RWPE1 (cell line): ENCODE measurements at regions of chr12 and their contacts with region 1.

Region 1: GRCh38 chr12:6987948-6988553 is 17.3 kb downstream of the EMG1 start:
- DNase-seq: no peak
- H3K27ac ChIP-seq: no peak overlapping the region
- CTCF ChIP-seq: no peak

Region 2: DNA sequence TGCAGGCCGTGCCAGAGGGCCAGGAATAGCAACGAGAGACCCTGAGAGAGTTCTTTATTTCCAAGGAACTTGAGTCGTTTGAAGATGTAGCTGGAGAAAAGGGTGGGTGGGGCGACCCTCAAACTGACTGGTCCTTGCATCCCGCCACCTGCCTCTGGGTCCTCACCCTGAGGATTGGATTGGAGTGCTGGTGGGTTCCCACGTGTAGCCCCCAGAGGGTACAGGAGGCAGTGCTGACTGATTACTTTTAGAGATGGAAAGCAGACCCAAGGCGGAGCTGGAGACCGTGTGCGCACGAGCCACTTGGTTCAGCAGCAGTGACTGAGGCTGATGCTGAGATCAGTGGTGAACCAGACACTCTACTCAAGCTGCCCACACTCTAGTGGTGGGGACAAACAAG is 10.4 kb before region 1 on chr12:
- CTCF ChIA-PET with region 1: no interaction called
- POLR2A ChIA-PET with region 1: interaction called, 16 read pairs
- DNase-seq: no peak
- H3K27ac ChIP-seq: peak overlapping the region; percentile 62; the same call in 1 of the 2 replicates
- CTCF ChIP-seq: no peak

Region 3: GRCh38 chr12:7571257-7571656 is 583.2 kb after region 1 on chr12:
- CTCF ChIA-PET with region 1: no interaction called
- POLR2A ChIA-PET with region 1: no interaction called
- DNase-seq: no peak
- H3K27ac ChIP-seq: no peak overlapping the region
- CTCF ChIP-seq: no peak